ENCODE measurements at regions of chr17 and their contacts with region 1.

Region 1: GRCh38 chr17:30477083-30477773 is at the start of gene GOSR1:
- H3K4me3 Mint-ChIP-seq: peak within 1 kb of the TSS; percentile 88
- H3K27ac Mint-ChIP-seq: peak within 1 kb of the TSS; percentile 99
- H3K4me1 Mint-ChIP-seq: peaks cover 7% of the 10 kb centered on the region
- H3K27me3 Mint-ChIP-seq: no peaks in the 10 kb centered on the region

Region 2: GRCh38 chr17:30716461-30717300 is 239.5 kb after region 1 on chr17:
- intact Hi-C with region 1: loop called (anchors 5 kb)
- H3K4me3 Mint-ChIP-seq: no peak overlapping the region
- H3K27ac Mint-ChIP-seq: peak overlapping the region; percentile 31
- H3K4me1 Mint-ChIP-seq: peaks cover 92% of the 10 kb centered on the region
- H3K27me3 Mint-ChIP-seq: no peaks in the 10 kb centered on the region

Region 3: GRCh38 chr17:30824356-30825145 is 347.3 kb after region 1 on chr17 and contains the start of gene CRLF3:
- intact Hi-C with region 1: loop called (anchors 5 kb)
- H3K4me3 Mint-ChIP-seq: peak within 1 kb of the TSS; percentile 100
- H3K27ac Mint-ChIP-seq: peak within 1 kb of the TSS; percentile 95
- H3K4me1 Mint-ChIP-seq: peaks cover 45% of the 10 kb centered on the region
- H3K27me3 Mint-ChIP-seq: no peaks in the 10 kb centered on the region